Naive thymus-derived CD4-positive, alpha-beta T cell (primary cell): ENCODE measurements at regions of chr12 and their contacts with region 1.

Region 1: GRCh38 chr12:96434107-96434506 is 33.9 kb upstream of the CDK17 start:
- DNase-seq: peak; percentile 10 to 92 (median 88)
- ATAC-seq: peak; percentile 100
- H3K4me3 ChIP-seq: no peak overlapping the region
- H3K4me3 Mint-ChIP-seq: peak overlapping the region; percentile 10 to 81 (median 64)
- H3K27ac ChIP-seq: peak overlapping the region; percentile 81
- H3K27ac Mint-ChIP-seq: peak overlapping the region; percentile 60 to 94 (median 84)
- H3K4me1 ChIP-seq: peaks cover 15 to 20% of the 10 kb centered on the region in 2 donors
- H3K4me1 Mint-ChIP-seq: peaks cover 24 to 52% (median 43%) of the 10 kb centered on the region in 7 donors
- H3K27me3 ChIP-seq: no peaks in the 10 kb centered on the region
- H3K27me3 Mint-ChIP-seq: no peaks in the 10 kb centered on the region

Region 2: GRCh38 chr12:96419576-96420271 is 14.4 kb before region 1 on chr12:
- CTCF ChIA-PET with region 1: interaction called, 3 read pairs
- POLR2A ChIA-PET with region 1: interaction called, 3 read pairs
- intact Hi-C with region 1: loop called in 1 of 2 experiments (anchors 1 kb)
- DNase-seq: no peak
- ATAC-seq: no peak
- H3K4me3 ChIP-seq: no peak overlapping the region
- H3K4me3 Mint-ChIP-seq: peak overlapping the region in 1 of 10 donors; percentile 83
- H3K27ac ChIP-seq: no peak overlapping the region
- H3K27ac Mint-ChIP-seq: peak overlapping the region; percentile 32 to 92 (median 73)
- H3K4me1 ChIP-seq: peaks cover 0 to 7% of the 10 kb centered on the region in 2 donors
- H3K4me1 Mint-ChIP-seq: peaks cover 0 to 42% (median 25%) of the 10 kb centered on the region in 7 donors
- H3K27me3 ChIP-seq: no peaks in the 10 kb centered on the region
- H3K27me3 Mint-ChIP-seq: no peaks in the 10 kb centered on the region

Region 3: GRCh38 chr12:96456265-96456974 is 22.3 kb after region 1 on chr12:
- CTCF ChIA-PET with region 1: interaction called, 3 read pairs
- POLR2A ChIA-PET with region 1: no interaction called
- intact Hi-C with region 1: loop called in 1 of 2 experiments (anchors 2 kb)
- DNase-seq: no peak
- ATAC-seq: peak; percentile 46
- H3K4me3 ChIP-seq: no peak overlapping the region
- H3K4me3 Mint-ChIP-seq: no peak overlapping the region
- H3K27ac ChIP-seq: no peak overlapping the region
- H3K27ac Mint-ChIP-seq: peak overlapping the region in 1 of 9 donors; percentile 59
- H3K4me1 ChIP-seq: no peaks in the 10 kb centered on the region
- H3K4me1 Mint-ChIP-seq: peaks cover 5 to 16% (median 9%) of the 10 kb centered on the region in 7 donors
- H3K27me3 ChIP-seq: no peaks in the 10 kb centered on the region
- H3K27me3 Mint-ChIP-seq: no peaks in the 10 kb centered on the region